ENCODE measurements at regions of chr18 and their contacts with region 1.

Region 1: DNA sequence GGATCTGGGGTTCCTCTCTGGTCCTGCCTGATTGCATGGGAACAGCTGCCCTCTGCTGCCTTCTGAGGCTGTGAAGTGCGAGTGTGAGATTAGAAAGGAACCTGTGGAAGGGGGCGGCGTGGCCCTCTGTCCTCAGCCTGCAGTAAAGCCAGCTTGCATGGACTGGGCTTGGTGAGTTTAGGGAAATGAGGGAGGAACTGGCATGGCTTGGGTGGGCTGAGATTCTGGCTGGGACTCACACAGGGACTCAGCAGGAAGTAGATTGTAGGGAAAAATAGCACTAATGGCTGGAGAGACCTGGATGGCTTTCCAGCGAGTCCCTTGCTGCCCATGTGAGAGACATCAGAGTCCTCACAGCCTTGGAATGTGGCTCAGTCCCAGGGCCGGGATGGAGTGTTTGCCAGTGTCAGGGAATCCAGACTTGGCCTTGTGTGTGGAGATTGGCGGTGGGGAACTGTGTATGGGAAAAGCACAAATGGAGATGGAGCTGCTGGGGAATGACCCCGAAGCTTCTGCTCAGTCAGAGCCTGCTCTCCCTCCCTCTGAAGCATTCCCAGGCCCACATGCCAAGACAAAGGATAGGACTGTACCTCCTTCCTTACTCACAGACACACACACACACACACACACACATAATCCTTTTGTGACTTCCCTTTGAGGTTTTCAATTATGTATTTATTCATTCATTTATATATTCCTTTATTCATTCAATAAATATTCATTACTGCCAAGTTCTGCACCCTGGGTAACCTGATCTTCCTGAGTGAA is 115.4 kb downstream of the ACAA2 start:
- DNase-seq: peak; percentile 85

Region 2: DNA sequence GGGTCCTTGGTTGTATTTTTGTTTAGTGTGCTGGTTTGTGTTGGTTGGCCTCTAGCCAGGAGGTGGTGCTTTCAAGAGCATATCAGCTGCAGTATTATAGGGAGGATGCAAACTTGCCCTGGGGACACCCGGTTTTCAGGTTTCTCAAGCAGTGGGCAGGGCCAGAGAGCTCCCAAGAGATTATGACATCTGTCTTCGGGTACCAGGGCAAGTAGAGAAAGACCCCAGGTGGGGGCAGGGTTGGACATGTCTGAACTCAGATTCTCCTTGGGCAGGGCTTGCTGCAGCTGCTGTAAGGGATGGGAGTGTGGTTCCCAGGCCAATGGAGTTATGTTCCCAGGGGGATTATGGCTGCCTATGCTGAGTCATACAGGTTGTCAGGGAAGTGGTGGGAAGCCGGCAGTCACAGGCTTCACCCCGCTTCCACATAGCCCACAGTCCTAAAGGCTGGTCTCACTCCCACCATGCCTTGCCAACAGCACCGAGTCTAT is 81.1 kb after region 1 on chr18:
- intact Hi-C with region 1: no loop called
- DNase-seq: no peak

Region 3: DNA sequence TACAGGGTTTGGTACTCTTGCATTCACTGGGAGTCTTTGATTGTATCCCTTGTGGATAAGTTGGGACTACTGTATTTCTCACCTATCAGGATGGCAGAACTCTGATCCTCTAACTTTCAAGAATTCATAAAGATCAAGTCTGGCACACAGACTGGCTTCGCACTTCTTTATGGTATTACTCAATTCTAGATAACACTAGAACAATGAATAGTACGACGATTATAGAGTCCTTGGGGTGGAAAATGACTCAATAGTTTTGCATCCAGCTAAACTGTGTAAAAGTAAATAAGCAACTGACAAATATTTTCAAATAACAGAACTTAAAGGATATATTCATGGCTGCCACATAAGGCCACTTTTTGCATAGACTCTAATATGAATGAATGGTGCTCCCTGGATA is 1603.0 kb after region 1 on chr18:
- intact Hi-C with region 1: loop called in 1 of 2 experiments (anchors 5 kb)
- DNase-seq: no peak